ENCODE measurements at regions of chr19 and their contacts with region 1.

Region 1: GRCh38 chr19:8444645-8445487 is at the start of gene HNRNPM:
- DNase-seq: peak; percentile 98
- H3K4me3 Mint-ChIP-seq: peak within 1 kb of the TSS; percentile 95
- H3K27ac Mint-ChIP-seq: peak within 1 kb of the TSS; percentile 99
- H3K4me1 Mint-ChIP-seq: peaks cover 21% of the 10 kb centered on the region
- H3K27me3 Mint-ChIP-seq: no peaks in the 10 kb centered on the region
- CTCF ChIP-seq: no peak
- total RNA-seq, gene HNRNPM: 149 and 161 TPM in 2 replicates

Region 2: GRCh38 chr19:6540918-6541689 is 1903.8 kb before region 1 on chr19:
- CTCF ChIA-PET with region 1: no interaction called
- POLR2A ChIA-PET with region 1: no interaction called
- intact Hi-C with region 1: no loop called
- DNase-seq: no peak
- H3K4me3 Mint-ChIP-seq: no peak overlapping the region
- H3K27ac Mint-ChIP-seq: no peak overlapping the region
- H3K4me1 Mint-ChIP-seq: peaks cover 12% of the 10 kb centered on the region
- H3K27me3 Mint-ChIP-seq: no peaks in the 10 kb centered on the region
- CTCF ChIP-seq: no peak

Region 3: GRCh38 chr19:8240274-8241229 is 204.3 kb before region 1 on chr19:
- CTCF ChIA-PET with region 1: no interaction called
- POLR2A ChIA-PET with region 1: no interaction called
- intact Hi-C with region 1: no loop called
- DNase-seq: peak; percentile 87
- H3K4me3 Mint-ChIP-seq: peak overlapping the region; percentile 39
- H3K27ac Mint-ChIP-seq: peak overlapping the region; percentile 65
- H3K4me1 Mint-ChIP-seq: peaks cover 19% of the 10 kb centered on the region
- H3K27me3 Mint-ChIP-seq: no peaks in the 10 kb centered on the region
- CTCF ChIP-seq: no peak

Region 4: GRCh38 chr19:8321060-8321985 is 123.5 kb before region 1 on chr19 and contains the starts of genes NDUFA7 and RPS28:
- CTCF ChIA-PET with region 1: interaction called, 3 read pairs
- POLR2A ChIA-PET with region 1: interaction called, 20 read pairs
- intact Hi-C with region 1: no loop called
- DNase-seq: peak; percentile 96
- H3K4me3 Mint-ChIP-seq: peak within 1 kb of the TSS; percentile 88
- H3K27ac Mint-ChIP-seq: peak within 1 kb of the TSS; percentile 90
- H3K4me1 Mint-ChIP-seq: peaks cover 7% of the 10 kb centered on the region
- H3K27me3 Mint-ChIP-seq: no peaks in the 10 kb centered on the region
- CTCF ChIP-seq: no peak
- total RNA-seq, gene NDUFA7: 83.2 and 91.8 TPM in 2 replicates
- total RNA-seq, gene RPS28: 2,247 and 2,362 TPM in 2 replicates

Region 5: GRCh38 chr19:8412783-8413628 is 31.9 kb before region 1 on chr19 and contains the start of gene MARCHF2:
- CTCF ChIA-PET with region 1: interaction called, 20 read pairs
- POLR2A ChIA-PET with region 1: interaction called, 45 read pairs
- intact Hi-C with region 1: loop called (anchors 5 kb)
- DNase-seq: peak; percentile 96
- H3K4me3 Mint-ChIP-seq: peak within 1 kb of the TSS; percentile 41
- H3K27ac Mint-ChIP-seq: no peak within 1 kb of the TSS
- H3K4me1 Mint-ChIP-seq: no peaks in the 10 kb centered on the region
- H3K27me3 Mint-ChIP-seq: no peaks in the 10 kb centered on the region
- CTCF ChIP-seq: peak; percentile 61
- total RNA-seq, gene MARCHF2: 8.3 and 11.5 TPM in 2 replicates

Region 6: GRCh38 chr19:8423817-8424223 is 21.0 kb before region 1 on chr19:
- CTCF ChIA-PET with region 1: interaction called, 4 read pairs
- POLR2A ChIA-PET with region 1: interaction called, 42 read pairs
- intact Hi-C with region 1: loop called (anchors 1 kb)
- DNase-seq: peak; percentile 99
- H3K4me3 Mint-ChIP-seq: no peak overlapping the region
- H3K27ac Mint-ChIP-seq: peak overlapping the region; percentile 57
- H3K4me1 Mint-ChIP-seq: no peaks in the 10 kb centered on the region
- H3K27me3 Mint-ChIP-seq: no peaks in the 10 kb centered on the region
- CTCF ChIP-seq: no peak

Region 7: DNA sequence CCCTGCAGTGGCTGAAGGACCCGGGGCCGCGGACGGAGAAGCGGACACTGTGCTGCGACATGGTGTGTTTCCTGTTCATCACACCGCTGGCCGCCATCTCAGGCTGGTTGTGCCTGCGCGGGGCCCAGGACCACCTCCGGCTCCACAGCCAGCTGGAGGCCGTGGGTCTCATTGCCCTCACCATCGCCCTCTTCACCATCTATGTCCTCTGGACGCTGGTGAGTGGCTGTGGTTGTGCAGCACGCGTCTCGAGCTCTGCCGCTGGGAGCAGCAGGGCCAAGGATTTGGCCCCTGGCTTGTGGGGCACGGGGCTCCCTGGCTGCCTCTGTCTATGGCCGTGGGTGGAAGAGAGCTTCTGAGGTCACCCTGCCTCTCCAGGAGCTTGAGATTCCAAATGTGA is 14.2 kb before region 1 on chr19:
- CTCF ChIA-PET with region 1: interaction called, 3 read pairs
- POLR2A ChIA-PET with region 1: interaction called, 10 read pairs
- intact Hi-C with region 1: no loop called
- DNase-seq: no peak
- H3K4me3 Mint-ChIP-seq: no peak overlapping the region
- H3K27ac Mint-ChIP-seq: no peak overlapping the region
- H3K4me1 Mint-ChIP-seq: no peaks in the 10 kb centered on the region
- H3K27me3 Mint-ChIP-seq: no peaks in the 10 kb centered on the region
- CTCF ChIP-seq: no peak

Region 8: DNA sequence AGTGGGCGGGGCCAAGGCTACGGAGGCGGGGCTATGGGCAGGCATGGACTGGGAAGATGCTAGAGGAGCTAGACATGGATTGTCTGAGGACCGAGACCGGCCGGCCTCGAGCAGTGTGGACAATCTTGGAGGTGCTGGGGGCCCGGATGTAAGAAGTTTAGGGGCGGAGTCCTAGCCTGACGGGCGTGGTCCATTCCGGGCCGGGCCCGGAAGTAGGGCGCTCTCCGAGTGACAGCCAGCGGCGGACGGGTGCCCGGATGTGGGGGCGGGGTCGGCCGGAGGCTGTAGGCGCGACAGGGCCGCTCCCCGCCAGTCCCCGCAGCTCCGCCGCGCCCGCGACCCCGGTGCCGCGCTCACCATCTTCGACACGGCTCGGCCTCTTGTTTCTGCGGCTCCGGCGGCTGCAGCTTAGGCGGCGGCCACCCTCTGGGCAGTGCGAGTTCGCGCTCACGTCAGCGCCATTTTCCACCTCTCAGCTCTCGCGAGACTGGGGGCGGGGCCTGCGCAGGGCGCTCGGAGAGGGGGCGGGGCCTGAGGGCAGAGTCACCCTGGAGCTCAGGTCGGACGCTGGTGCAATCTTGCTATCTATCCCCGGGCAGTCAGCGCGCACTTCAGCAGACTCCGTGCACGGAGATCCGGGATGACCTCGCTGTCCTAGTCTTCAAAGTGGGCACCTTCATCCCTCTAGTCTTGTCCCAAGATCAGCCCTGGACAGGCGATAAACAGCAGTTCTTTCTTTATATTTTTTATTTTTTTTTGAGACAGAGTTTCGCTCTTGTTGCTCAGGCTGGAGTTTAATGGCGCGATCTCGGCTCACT is 69.0 kb after region 1 on chr19 and contains the start of gene ZNF414:
- CTCF ChIA-PET with region 1: no interaction called
- POLR2A ChIA-PET with region 1: interaction called, 16 read pairs
- intact Hi-C with region 1: loop called (anchors 2 kb)
- DNase-seq: peak; percentile 98
- H3K4me3 Mint-ChIP-seq: peak within 1 kb of the TSS; percentile 85
- H3K27ac Mint-ChIP-seq: peak within 1 kb of the TSS; percentile 99
- H3K4me1 Mint-ChIP-seq: peaks cover 15% of the 10 kb centered on the region
- H3K27me3 Mint-ChIP-seq: no peaks in the 10 kb centered on the region
- CTCF ChIP-seq: no peak
- total RNA-seq, gene ZNF414: 16.3 and 27.2 TPM in 2 replicates

Measured in MCF 10A (cell line).